HEK293 (cell line): ENCODE measurements at regions of chr1 and their contacts with region 1.

Region 1: DNA sequence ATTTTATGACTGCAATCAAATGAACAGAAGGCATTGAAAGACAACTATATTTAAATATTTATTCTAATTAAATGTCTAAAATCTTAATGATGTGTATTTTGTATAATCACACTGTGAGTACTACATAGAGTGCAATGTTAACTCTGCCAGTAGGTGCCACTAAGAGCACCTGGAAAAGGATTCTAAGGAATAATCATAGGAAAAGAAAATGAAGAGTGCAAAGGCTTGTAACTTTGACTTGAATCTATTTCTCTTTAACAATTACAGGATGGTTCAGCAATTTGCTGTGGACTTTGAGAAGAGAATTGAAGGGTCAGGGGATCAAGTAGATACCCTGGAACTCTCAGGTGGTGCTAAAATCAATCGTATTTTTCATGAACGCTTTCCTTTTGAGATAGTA is 200.4 kb downstream of the DNM3 start:
- H3K4me3 ChIP-seq: no peak overlapping the region
- H3K27ac ChIP-seq: no peak overlapping the region
- H3K4me1 ChIP-seq: no peaks in the 10 kb centered on the region
- CTCF ChIP-seq: no peak

Region 2: GRCh38 chr1:172085317-172085716 is 43.6 kb after region 1 on chr1:
- CTCF ChIA-PET with region 1: no interaction called
- POLR2A ChIA-PET with region 1: no interaction called
- H3K4me3 ChIP-seq: no peak overlapping the region
- H3K27ac ChIP-seq: no peak overlapping the region
- H3K4me1 ChIP-seq: no peaks in the 10 kb centered on the region
- CTCF ChIP-seq: no peak

Region 3: GRCh38 chr1:172398970-172399755 is 357.4 kb after region 1 on chr1:
- CTCF ChIA-PET with region 1: interaction called, 10 read pairs
- POLR2A ChIA-PET with region 1: no interaction called
- H3K4me3 ChIP-seq: no peak overlapping the region
- H3K27ac ChIP-seq: no peak overlapping the region
- H3K4me1 ChIP-seq: no peaks in the 10 kb centered on the region
- CTCF ChIP-seq: peak; percentile 8; the same call in 1 of the 2 replicates

Region 4: DNA sequence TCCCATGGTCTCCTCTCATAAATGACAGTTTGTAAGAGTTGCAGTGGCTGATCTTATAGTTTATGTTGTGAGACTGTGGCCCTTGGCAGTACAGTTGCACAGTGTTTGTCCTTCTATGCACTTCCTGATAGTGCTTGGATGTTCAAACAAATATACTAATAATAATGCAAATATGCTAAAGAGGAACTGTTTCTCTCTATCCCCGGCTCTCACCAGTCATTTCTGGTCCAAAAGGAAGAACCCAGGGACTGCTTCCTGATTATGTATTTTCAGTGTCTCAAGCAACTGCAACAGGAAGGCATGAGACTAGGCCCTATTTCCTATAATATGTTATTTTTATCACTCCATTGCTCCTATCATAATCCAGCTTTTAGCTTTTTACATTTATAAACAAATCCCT is 474.2 kb after region 1 on chr1:
- CTCF ChIA-PET with region 1: no interaction called
- POLR2A ChIA-PET with region 1: no interaction called
- H3K4me3 ChIP-seq: no peak overlapping the region
- H3K27ac ChIP-seq: no peak overlapping the region
- H3K4me1 ChIP-seq: no peaks in the 10 kb centered on the region
- CTCF ChIP-seq: no peak